ENCODE measurements at regions of chr14 and their contacts with region 1.

Region 1: GRCh38 chr14:100400115-100400514 is 77.0 kb downstream of the SLC25A47 start:
- DNase-seq: no peak
- H3K4me3 ChIP-seq: no peak overlapping the region
- H3K4me3 Mint-ChIP-seq: no peak overlapping the region
- H3K27ac ChIP-seq: no peak overlapping the region
- H3K27ac Mint-ChIP-seq: peak overlapping the region in 2 of 7 donors; percentile 1 to 15
- H3K4me1 ChIP-seq: peaks cover 8 to 15% of the 10 kb centered on the region in 2 donors
- H3K4me1 Mint-ChIP-seq: peaks cover 36% of the 10 kb centered on the region
- H3K27me3 ChIP-seq: no peaks in the 10 kb centered on the region
- H3K27me3 Mint-ChIP-seq: peaks cover 0 to 3% (median 0%) of the 10 kb centered on the region in 3 donors
- CTCF ChIP-seq: no peak

Region 2: GRCh38 chr14:100372357-100373048 is 27.6 kb before region 1 on chr14:
- intact Hi-C with region 1: no loop called
- DNase-seq: no peak
- H3K4me3 ChIP-seq: peak overlapping the region in 2 of 3 experiments; percentile 22 to 91
- H3K4me3 Mint-ChIP-seq: peak overlapping the region; percentile 42 to 96
- H3K27ac ChIP-seq: peak overlapping the region; percentile 15 to 97
- H3K27ac Mint-ChIP-seq: peak overlapping the region; percentile 16 to 100 (median 100)
- H3K4me1 ChIP-seq: peaks cover 42 to 47% of the 10 kb centered on the region in 2 donors
- H3K4me1 Mint-ChIP-seq: peaks cover 55% of the 10 kb centered on the region
- H3K27me3 ChIP-seq: no peaks in the 10 kb centered on the region
- H3K27me3 Mint-ChIP-seq: peaks cover 0 to 2% (median 0%) of the 10 kb centered on the region in 3 donors
- CTCF ChIP-seq: no peak

Region 3: DNA sequence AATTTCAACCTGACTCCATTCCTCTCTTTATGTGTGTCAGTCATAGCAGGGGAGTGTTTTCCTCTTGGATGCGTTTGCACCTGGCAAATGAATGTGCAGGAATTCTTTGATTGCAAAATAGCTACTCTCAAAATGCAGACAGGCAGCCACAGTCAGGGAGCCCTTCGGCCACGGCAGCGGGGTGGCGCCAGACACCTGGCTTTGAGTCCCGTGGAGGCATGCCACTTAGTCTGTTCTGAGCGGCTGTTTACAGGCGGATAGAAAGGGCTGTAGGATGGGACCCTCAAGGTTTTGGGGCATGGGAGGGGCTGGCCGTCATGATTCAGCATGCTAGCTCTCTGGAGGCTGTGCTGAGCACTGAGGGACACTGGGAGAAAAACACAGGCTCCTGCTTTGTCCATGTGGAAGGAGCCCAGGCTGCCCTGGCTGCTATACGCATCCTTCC is 40.1 kb after region 1 on chr14:
- intact Hi-C with region 1: loop called in 1 of 2 experiments (anchors 5 kb)
- DNase-seq: peak in 2 of 3 donors; percentile 26 to 51
- H3K4me3 ChIP-seq: no peak overlapping the region
- H3K4me3 Mint-ChIP-seq: no peak overlapping the region
- H3K27ac ChIP-seq: no peak overlapping the region
- H3K27ac Mint-ChIP-seq: peak overlapping the region in 2 of 7 donors; percentile 15 to 54
- H3K4me1 ChIP-seq: peaks cover 13% of the 10 kb centered on the region in 2 donors
- H3K4me1 Mint-ChIP-seq: peaks cover 36% of the 10 kb centered on the region
- H3K27me3 ChIP-seq: no peaks in the 10 kb centered on the region
- H3K27me3 Mint-ChIP-seq: no peaks in the 10 kb centered on the region
- CTCF ChIP-seq: peak; percentile 81